ENCODE measurements at regions of chr14 and their contacts with region 1.

Region 1: GRCh38 chr14:96071561-96071960 is 32.4 kb downstream of the C14orf132 start:
- DNase-seq: no peak
- ATAC-seq: no peak
- H3K4me3 ChIP-seq: no peak overlapping the region
- H3K27ac ChIP-seq: no peak overlapping the region
- H3K4me1 ChIP-seq: no peaks in the 10 kb centered on the region
- CTCF ChIP-seq: no peak
- EP300 ChIP-seq: no peak
- POLR2A ChIP-seq: no peak
- RAD21 ChIP-seq: no peak

Region 2: DNA sequence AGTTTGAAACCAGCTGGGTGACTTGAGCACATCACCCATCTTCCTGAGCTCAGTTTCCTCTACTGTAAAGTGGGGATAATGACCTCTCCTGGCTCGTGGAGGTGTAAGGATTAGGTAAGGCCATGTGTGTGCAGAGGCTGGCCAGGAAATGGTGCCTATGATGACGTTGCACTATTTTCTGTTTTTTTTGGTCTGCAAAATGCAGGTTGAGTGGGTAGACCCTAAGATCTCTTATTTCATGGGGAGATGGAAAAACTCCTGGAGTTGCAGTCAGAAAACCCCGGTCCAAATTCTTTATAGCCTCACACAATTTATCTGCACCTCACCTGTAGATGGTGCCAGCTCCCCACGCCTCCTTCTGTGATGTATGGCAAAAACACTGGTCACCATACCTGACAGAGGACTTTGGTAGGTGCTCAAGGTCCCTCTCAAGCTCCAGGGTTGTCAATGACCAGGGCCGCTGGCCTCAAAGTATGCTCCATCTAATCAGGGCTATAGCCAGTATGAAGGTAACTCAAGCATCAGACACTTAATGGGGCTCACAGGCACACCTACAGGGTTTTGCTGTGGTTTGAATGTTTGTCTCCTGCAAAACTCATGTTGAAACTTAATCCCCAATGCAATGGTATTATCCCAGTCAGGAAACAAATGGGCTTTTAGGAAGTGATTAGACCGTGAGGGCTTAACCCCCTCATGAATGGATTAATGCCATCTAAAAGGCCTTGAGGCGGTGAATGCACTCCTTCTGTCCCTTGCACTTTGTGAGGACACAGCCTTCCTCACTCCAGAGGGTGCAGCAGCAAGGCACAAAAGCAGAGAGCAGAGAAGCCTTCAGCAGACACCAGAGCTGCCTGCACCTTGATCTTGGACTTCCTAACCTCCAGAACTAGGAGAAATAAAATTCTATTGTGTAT is 14.8 kb before region 1 on chr14:
- CTCF ChIA-PET with region 1: interaction called, 11 read pairs
- POLR2A ChIA-PET with region 1: no interaction called
- DNase-seq: no peak
- ATAC-seq: 0 out of 6 replicates have a peak, but pooled peaks of 1 of the 2 experiments have one; percentile 19
- H3K4me3 ChIP-seq: no peak overlapping the region
- H3K27ac ChIP-seq: no peak overlapping the region
- H3K4me1 ChIP-seq: peaks cover 18% of the 10 kb centered on the region; the same call in 2 of the 3 replicates
- CTCF ChIP-seq: peak; percentile 50; the same call in 2 of the 3 replicates
- EP300 ChIP-seq: no peak
- POLR2A ChIP-seq: no peak
- RAD21 ChIP-seq: peak; percentile 63 to 66